ENCODE measurements at regions of chr16 and their contacts with region 1.

Region 1: GRCh38 chr16:88437373-88437964 is 15.6 kb upstream of the ZFPM1 start:
- DNase-seq: peak in 2 of 5 donors; percentile 51 to 57
- ATAC-seq: peak in 3 of 4 donors; percentile 16 to 54 (median 22)
- H3K4me3 ChIP-seq: no peak overlapping the region
- H3K27ac ChIP-seq: no peak overlapping the region
- H3K4me1 ChIP-seq: peaks cover 0 to 6% (median 0%) of the 10 kb centered on the region in 12 donors
- H3K27me3 ChIP-seq: peaks cover 0 to 19% (median 0%) of the 10 kb centered on the region in 9 donors
- CTCF ChIP-seq: peak; percentile 78 to 93 (median 84)
- POLR2A ChIP-seq: no peak

Region 2: GRCh38 chr16:87982491-87983415 is 454.7 kb before region 1 on chr16:
- intact Hi-C with region 1: loop called in 5 of 10 experiments (anchors 5 to 10 kb)
- DNase-seq: peak in 1 of 5 donors; percentile 10
- ATAC-seq: peak in 2 of 4 donors; percentile 3
- H3K4me3 ChIP-seq: no peak overlapping the region
- H3K27ac ChIP-seq: no peak overlapping the region
- H3K4me1 ChIP-seq: peaks cover 0 to 25% (median 0%) of the 10 kb centered on the region in 12 donors
- H3K27me3 ChIP-seq: no peaks in the 10 kb centered on the region
- CTCF ChIP-seq: no peak
- POLR2A ChIP-seq: no peak

Region 3: DNA sequence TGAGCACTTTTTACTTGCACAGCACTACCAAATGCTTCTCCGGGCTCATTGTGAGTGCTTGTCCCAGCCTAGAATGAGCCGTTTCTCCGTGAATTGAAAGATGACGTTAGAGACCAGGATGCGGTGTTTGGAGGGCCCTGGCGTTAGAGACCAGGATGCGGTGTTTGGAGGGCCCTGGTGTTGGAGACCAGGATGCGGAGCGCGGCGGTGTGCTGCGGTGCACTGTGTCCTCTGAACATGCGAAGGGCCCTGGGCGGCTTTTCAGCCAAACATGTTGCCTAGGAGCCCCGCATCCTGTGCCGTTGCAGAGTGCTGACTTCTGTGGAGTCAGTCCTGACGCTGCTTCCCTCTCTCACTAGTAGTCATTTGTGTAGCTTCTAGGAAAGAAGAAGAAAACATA is 443.6 kb before region 1 on chr16:
- intact Hi-C with region 1: loop called in 3 of 10 experiments (anchors 5 to 10 kb)
- DNase-seq: no peak
- ATAC-seq: no peak
- H3K4me3 ChIP-seq: no peak overlapping the region
- H3K27ac ChIP-seq: no peak overlapping the region
- H3K4me1 ChIP-seq: no peaks in the 10 kb centered on the region
- H3K27me3 ChIP-seq: no peaks in the 10 kb centered on the region
- CTCF ChIP-seq: no peak
- POLR2A ChIP-seq: no peak

Region 4: DNA sequence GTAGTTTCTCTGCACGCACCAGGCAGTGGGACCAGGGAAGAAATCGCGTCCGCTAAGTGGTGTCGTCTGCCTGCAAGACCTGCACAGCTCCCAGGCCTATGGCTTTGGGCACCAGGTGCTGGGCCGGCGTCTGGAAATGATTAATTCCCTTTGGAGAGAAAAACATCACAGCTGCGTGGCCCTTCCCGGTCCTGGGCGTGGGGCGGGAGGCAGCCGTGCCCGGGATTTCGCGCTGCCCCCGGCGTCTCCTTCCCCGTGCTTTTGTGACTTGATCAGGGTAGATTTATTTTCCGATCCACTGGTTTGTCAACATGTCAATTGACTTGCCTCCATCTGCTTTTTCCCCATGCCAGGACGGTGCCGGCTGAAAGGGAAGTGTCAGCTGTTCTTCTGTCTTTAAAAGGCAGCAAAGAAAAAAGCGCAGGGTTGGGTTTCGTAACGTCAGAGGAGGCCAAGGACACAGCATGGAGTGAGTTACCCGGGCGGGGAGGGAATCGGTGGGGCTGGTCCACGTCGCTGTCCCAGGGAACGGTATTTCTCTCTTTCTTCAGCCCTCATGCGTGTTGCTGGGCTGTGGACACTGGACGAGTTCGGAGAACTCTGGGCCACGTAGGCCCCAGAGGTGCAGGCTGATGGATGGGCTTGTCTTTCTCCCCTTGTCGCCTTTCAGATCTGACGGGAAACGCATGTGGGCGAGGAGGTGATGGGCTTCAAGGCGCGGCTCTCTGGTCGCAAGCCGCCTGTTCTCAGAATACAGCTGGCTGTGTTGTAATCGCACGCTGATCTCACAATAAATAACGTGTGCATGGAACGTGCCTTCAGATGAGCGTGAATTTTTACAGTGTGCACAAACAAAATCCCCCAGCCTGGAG is 242.8 kb before region 1 on chr16:
- intact Hi-C with region 1: loop called in 9 of 10 experiments (anchors 1 to 10 kb)
- DNase-seq: no peak
- ATAC-seq: peak; percentile 3 to 29 (median 14)
- H3K4me3 ChIP-seq: no peak overlapping the region
- H3K27ac ChIP-seq: no peak overlapping the region
- H3K4me1 ChIP-seq: no peaks in the 10 kb centered on the region
- H3K27me3 ChIP-seq: no peaks in the 10 kb centered on the region
- CTCF ChIP-seq: peak in 1 of 12 donors; percentile 21
- POLR2A ChIP-seq: no peak

Region 5: GRCh38 chr16:88585269-88585668 is 147.8 kb after region 1 on chr16:
- intact Hi-C with region 1: no loop called
- DNase-seq: peak in 1 of 5 donors; percentile 2
- ATAC-seq: no peak
- H3K4me3 ChIP-seq: no peak overlapping the region
- H3K27ac ChIP-seq: no peak overlapping the region
- H3K4me1 ChIP-seq: peaks cover 0 to 12% (median 0%) of the 10 kb centered on the region in 12 donors
- H3K27me3 ChIP-seq: no peaks in the 10 kb centered on the region
- CTCF ChIP-seq: no peak
- POLR2A ChIP-seq: no peak